Activated CD4-positive, alpha-beta T cell treated with anti-CD3 and anti-CD28 coated beads for 36 hours (primary cell): ENCODE measurements at regions of chr3 and their contacts with region 1.

Region 1: DNA sequence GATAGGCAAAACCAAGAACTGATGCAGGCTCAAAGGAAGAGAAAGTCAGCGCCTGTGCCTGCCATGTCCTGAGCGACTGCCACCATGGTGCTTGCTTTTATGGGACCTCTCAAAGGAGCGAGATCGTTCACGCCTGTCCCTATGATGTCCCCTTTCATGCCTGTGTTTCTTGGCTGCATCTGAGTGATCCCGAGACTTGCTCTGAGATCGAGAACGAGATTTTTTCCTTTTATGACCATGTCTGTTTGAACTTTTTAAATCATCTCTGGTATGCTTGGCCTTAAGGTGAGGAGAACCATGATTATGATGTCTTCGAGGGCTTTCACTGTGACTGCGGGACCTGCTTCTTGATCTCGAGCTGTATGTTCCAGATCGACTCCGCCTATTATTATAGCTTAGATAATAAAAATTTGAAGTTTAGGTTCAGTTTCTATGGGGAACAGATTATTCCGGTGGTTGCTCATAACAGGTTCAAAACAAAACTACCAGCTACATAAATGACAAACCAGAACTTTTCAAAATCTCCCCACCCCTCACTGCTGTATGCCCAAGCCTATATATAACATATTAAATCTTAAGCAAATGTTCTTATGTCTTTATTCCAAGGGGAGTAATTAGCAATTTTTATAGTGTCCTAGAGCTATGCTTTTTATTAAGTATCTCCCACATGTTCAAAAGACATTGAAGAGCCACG is 11.6 kb downstream of the CCNL1 start:
- DNase-seq: peak; percentile 43
- ATAC-seq: peak; percentile 74
- H3K4me3 Mint-ChIP-seq: peak overlapping the region; percentile 27
- H3K27ac Mint-ChIP-seq: peak overlapping the region; percentile 74
- H3K4me1 Mint-ChIP-seq: peaks cover 45% of the 10 kb centered on the region
- H3K27me3 Mint-ChIP-seq: no peaks in the 10 kb centered on the region

Region 2: GRCh38 chr3:156685198-156685597 is 463.1 kb before region 1 on chr3:
- CTCF ChIA-PET with region 1: no interaction called
- POLR2A ChIA-PET with region 1: no interaction called
- intact Hi-C with region 1: loop called in 1 of 2 experiments (anchors 5 kb)
- DNase-seq: no peak
- ATAC-seq: peak; percentile 69
- H3K4me3 Mint-ChIP-seq: no peak overlapping the region
- H3K27ac Mint-ChIP-seq: no peak overlapping the region
- H3K4me1 Mint-ChIP-seq: peaks cover 76% of the 10 kb centered on the region
- H3K27me3 Mint-ChIP-seq: no peaks in the 10 kb centered on the region